PC-9 (cell line): ENCODE measurements at regions of chr19 and their contacts with region 1.

Region 1: GRCh38 chr19:5680437-5681368 is at the starts of genes HSD11B1L and MICOS13:
- DNase-seq: peak; percentile 90 to 93
- H3K4me3 ChIP-seq: peak within 1 kb of the TSS; percentile 99
- H3K27ac ChIP-seq: 0 out of 2 replicates have a peak within 1 kb of the TSS, but pooled peaks have one; percentile 49
- H3K4me1 ChIP-seq: no peaks in the 10 kb centered on the region
- H3K27me3 ChIP-seq: no peaks in the 10 kb centered on the region
- CTCF ChIP-seq: no peak
- total RNA-seq, gene HSD11B1L: 7.5 and 11.9 TPM in 2 replicates
- total RNA-seq, gene MICOS13: 31.1 and 34.7 TPM in 2 replicates

Region 2: GRCh38 chr19:5622463-5623396 is 58.0 kb before region 1 on chr19 and contains the starts of genes SAFB and SAFB2:
- CTCF ChIA-PET with region 1: no interaction called
- POLR2A ChIA-PET with region 1: interaction called, 3 read pairs
- intact Hi-C with region 1: loop called (anchors 2 kb)
- DNase-seq: peak; percentile 94 to 97
- H3K4me3 ChIP-seq: peak within 1 kb of the TSS; percentile 91
- H3K27ac ChIP-seq: peak within 1 kb of the TSS; percentile 65
- H3K4me1 ChIP-seq: peaks cover 17% of the 10 kb centered on the region
- H3K27me3 ChIP-seq: no peaks in the 10 kb centered on the region
- CTCF ChIP-seq: no peak
- total RNA-seq, gene SAFB: 68.7 and 88.7 TPM in 2 replicates
- total RNA-seq, gene SAFB2: 43.1 and 66.1 TPM in 2 replicates

Region 3: GRCh38 chr19:5790573-5791520 is 110.1 kb after region 1 on chr19 and contains the start of gene DUS3L:
- CTCF ChIA-PET with region 1: no interaction called
- POLR2A ChIA-PET with region 1: no interaction called
- intact Hi-C with region 1: loop called (anchors 2 kb)
- DNase-seq: peak; percentile 87 to 90
- H3K4me3 ChIP-seq: peak within 1 kb of the TSS; percentile 86
- H3K27ac ChIP-seq: peak within 1 kb of the TSS; percentile 85
- H3K4me1 ChIP-seq: no peaks in the 10 kb centered on the region
- H3K27me3 ChIP-seq: no peaks in the 10 kb centered on the region
- CTCF ChIP-seq: no peak
- total RNA-seq, gene DUS3L: 27.1 and 29.2 TPM in 2 replicates

Region 4: DNA sequence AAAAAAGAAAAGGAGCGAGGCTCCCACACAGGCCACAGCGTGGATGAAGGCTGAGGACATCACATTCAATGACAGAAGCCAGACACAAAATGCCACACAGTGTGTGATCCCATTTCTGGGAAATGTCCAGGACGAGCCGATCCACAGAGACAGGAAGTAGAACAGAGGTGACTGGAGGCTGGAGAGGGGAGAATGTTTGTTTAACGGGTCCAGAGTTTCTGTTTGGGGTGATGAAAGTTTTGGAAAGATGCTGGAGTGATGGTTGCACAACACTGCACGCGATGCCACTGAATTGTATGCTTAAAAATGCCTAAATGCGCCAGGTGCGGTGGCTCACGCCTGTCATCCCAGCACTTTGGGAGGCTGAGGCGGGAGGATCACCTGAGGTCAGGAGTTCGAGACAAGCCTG is 190.3 kb after region 1 on chr19:
- CTCF ChIA-PET with region 1: no interaction called
- POLR2A ChIA-PET with region 1: no interaction called
- intact Hi-C with region 1: no loop called
- DNase-seq: no peak
- H3K4me3 ChIP-seq: no peak overlapping the region
- H3K27ac ChIP-seq: no peak overlapping the region
- H3K4me1 ChIP-seq: no peaks in the 10 kb centered on the region
- H3K27me3 ChIP-seq: no peaks in the 10 kb centered on the region
- CTCF ChIP-seq: no peak